ENCODE measurements at regions of chr2 and their contacts with region 1.

Region 1: GRCh38 chr2:45541450-45541849 is 69.6 kb downstream of the SRBD1 start:
- DNase-seq: no peak
- ATAC-seq: no peak
- H3K4me3 ChIP-seq: no peak overlapping the region
- H3K27ac ChIP-seq: no peak overlapping the region
- H3K4me1 ChIP-seq: no peaks in the 10 kb centered on the region
- H3K27me3 ChIP-seq: no peaks in the 10 kb centered on the region
- CTCF ChIP-seq: no peak

Region 2: GRCh38 chr2:45320956-45321355 is 220.5 kb before region 1 on chr2:
- CTCF ChIA-PET with region 1: interaction called, 10 read pairs
- POLR2A ChIA-PET with region 1: no interaction called
- in situ Hi-C with region 1: no loop called
- intact Hi-C with region 1: no loop called
- DNase-seq: no peak
- ATAC-seq: no peak
- H3K4me3 ChIP-seq: no peak overlapping the region
- H3K27ac ChIP-seq: no peak overlapping the region
- H3K4me1 ChIP-seq: no peaks in the 10 kb centered on the region
- H3K27me3 ChIP-seq: no peaks in the 10 kb centered on the region; the same call in 1 of the 2 replicates
- CTCF ChIP-seq: no peak

Region 3: DNA sequence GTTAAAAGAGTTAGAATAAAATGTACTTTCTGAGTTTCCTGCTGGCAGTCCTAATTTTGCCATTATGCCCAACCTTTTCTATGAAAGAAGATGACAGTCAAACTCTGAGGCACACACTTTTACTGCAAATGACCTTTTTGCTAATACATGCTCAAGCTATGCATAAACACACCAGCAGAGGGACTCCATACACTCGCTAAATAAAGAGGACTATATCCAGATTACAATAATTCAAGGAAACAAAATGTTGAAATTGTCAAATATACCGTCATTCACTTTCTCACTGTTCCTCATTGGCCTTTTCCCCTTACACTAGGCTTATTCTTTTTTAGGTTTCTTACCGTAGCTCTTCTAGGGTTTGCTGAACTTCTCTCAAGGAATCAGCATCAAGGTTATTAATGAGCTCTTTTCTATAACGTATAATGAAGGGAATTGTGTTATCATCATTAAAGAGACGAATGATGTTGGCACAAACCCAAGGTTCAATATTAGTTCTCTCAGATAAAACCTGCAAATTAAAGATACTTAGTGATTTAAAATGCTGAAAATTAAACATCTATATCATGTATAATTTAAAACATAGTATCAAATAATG is 43.9 kb after region 1 on chr2:
- CTCF ChIA-PET with region 1: interaction called, 11 read pairs
- POLR2A ChIA-PET with region 1: no interaction called
- in situ Hi-C with region 1: no loop called
- intact Hi-C with region 1: no loop called
- DNase-seq: peak; percentile 27
- ATAC-seq: 0 out of 2 replicates have a peak, but pooled peaks have one; percentile 73
- H3K4me3 ChIP-seq: no peak overlapping the region
- H3K27ac ChIP-seq: no peak overlapping the region
- H3K4me1 ChIP-seq: no peaks in the 10 kb centered on the region
- H3K27me3 ChIP-seq: no peaks in the 10 kb centered on the region
- CTCF ChIP-seq: peak; percentile 74; the same call in 1 of the 2 replicates